Tibial artery (tissue), 4 donors: ENCODE measurements at regions of chr12 and their contacts with region 1.

Region 1: DNA sequence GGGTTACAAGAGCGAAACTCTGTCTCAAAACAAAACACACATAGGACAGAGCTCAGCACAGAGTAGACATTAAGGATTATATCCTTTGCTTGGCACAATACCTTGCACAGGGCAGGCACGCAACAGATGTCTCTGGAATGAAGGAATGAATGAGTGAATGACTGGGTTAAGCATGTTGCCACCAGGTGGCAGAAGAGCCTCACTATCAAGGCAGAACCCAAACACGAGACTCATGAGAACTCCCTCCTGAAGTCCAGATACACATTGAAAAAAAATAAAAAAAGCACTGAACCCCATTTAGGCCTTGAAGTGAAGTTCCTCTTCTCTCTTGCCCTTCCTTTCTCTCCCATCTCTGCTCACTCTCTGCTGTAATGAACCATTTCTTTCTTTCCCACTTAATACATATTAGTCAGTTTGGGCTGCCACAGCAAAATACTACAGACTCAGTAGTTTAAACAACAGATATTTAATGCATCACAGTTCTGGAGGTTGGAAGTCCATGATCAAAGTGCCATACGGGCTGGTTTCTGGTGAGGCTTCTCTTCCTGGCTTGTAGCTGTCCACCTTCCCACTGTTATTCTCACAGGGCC is 26.6 kb upstream of the LTA4H start:
- DNase-seq: peak; percentile 77 to 82
- H3K4me3 ChIP-seq: no peak overlapping the region
- H3K27ac ChIP-seq: no peak overlapping the region
- H3K4me1 ChIP-seq: no peaks in the 10 kb centered on the region
- H3K27me3 ChIP-seq: no peaks in the 10 kb centered on the region
- CTCF ChIP-seq: peak; percentile 82 to 84

Region 2: GRCh38 chr12:95998611-95999286 is 63.2 kb before region 1 on chr12:
- intact Hi-C with region 1: no loop called
- DNase-seq: no peak
- H3K4me3 ChIP-seq: no peak overlapping the region
- H3K27ac ChIP-seq: peak overlapping the region in 1 of 2 donors; percentile 14
- H3K4me1 ChIP-seq: peaks cover 0 to 8% (median 7%) of the 10 kb centered on the region in 4 donors
- H3K27me3 ChIP-seq: no peaks in the 10 kb centered on the region
- CTCF ChIP-seq: peak; percentile 53 to 57

Region 3: GRCh38 chr12:96035278-96036236 is 26.4 kb before region 1 on chr12 and contains the start of gene LTA4H:
- intact Hi-C with region 1: no loop called
- DNase-seq: peak; percentile 98
- H3K4me3 ChIP-seq: peak within 1 kb of the TSS; percentile 88 to 94
- H3K27ac ChIP-seq: peak within 1 kb of the TSS; percentile 91 to 95
- H3K4me1 ChIP-seq: peaks cover 0 to 16% (median 10%) of the 10 kb centered on the region in 4 donors
- H3K27me3 ChIP-seq: no peaks in the 10 kb centered on the region
- CTCF ChIP-seq: no peak

Region 4: DNA sequence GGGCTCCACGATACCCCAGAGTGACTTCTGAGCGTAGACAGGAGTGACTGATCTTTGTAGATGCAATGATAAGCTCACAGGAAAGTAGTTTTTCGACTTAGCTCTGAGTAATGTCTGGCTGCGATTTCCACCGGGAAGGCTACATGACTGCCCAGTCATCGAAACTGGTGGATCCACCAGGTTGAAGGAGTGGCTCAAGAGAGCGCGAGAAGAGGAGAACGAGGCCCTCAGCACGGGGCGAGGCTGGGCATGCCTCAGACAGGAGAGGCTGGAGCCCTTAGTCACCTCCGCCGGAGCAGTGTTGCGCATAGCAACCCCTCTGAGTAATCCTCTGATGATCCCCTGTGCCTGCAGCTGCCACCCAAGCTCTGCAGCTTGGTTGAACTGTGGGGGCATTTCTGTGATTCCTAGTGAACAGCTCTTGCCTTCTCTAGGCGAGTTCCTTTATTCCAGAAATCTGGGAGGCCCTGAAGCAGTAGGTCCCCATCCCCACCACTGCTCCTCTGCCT is 157.8 kb after region 1 on chr12:
- intact Hi-C with region 1: loop called (anchors 5 kb)
- DNase-seq: no peak
- H3K4me3 ChIP-seq: no peak overlapping the region
- H3K27ac ChIP-seq: no peak overlapping the region
- H3K4me1 ChIP-seq: peaks cover 0 to 12% (median 6%) of the 10 kb centered on the region in 4 donors
- H3K27me3 ChIP-seq: no peaks in the 10 kb centered on the region
- CTCF ChIP-seq: no peak

Region 5: DNA sequence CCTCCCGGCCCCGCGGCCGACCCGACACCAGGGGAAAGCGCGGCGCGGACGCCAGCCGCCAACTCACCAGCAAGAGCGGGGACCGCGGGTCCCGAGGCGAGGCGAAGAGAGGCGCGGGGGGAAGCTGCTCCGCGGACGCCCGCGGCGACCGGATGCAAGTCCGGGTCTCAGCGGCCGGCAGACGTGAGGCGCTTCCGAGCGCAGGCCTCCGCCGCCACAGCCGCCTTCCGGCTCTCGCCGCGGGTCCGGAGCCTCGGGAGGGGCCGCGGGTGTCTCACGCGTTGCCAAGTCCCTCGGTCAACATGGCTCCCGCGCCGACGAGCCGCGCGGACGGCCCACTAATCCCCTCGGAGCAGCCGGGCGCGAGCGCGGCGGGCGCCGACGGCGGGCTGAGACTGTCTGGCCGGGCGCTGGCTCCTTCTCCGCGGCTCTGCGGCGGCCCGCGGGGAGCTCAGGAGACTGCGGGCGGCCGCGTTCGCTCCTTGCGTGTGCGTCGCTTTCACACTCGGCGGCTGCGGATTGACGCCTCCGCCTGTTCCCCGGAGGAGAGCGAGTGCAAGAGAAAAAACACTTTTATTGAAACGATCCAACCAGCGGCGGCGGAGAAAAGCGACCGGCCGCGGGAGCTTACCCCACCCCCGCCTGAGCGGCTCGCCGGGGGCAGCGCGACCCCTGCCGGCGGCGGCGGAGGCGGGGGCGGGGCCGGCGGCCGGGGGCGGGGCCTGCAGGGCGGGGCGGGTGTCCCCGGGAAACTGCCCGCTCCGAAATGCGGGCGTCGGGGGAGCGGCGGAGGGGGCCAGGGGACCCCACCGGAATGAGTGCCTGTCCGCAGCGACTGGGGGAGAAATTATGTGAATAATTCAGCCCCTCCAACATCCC is 338.2 kb after region 1 on chr12 and contains the start of gene CDK17:
- intact Hi-C with region 1: loop called (anchors 10 kb)
- DNase-seq: peak; percentile 77 to 91
- H3K4me3 ChIP-seq: peak within 1 kb of the TSS; percentile 88 to 93
- H3K27ac ChIP-seq: peak within 1 kb of the TSS; percentile 99 to 100
- H3K4me1 ChIP-seq: peaks cover 0 to 24% (median 10%) of the 10 kb centered on the region in 4 donors
- H3K27me3 ChIP-seq: no peaks in the 10 kb centered on the region
- CTCF ChIP-seq: peak in 1 of 2 experiments; percentile 40

Region 6: GRCh38 chr12:96516472-96517430 is 454.8 kb after region 1 on chr12:
- intact Hi-C with region 1: loop called (anchors 5 kb)
- DNase-seq: peak; percentile 76 to 82
- H3K4me3 ChIP-seq: no peak overlapping the region
- H3K27ac ChIP-seq: no peak overlapping the region
- H3K4me1 ChIP-seq: no peaks in the 10 kb centered on the region
- H3K27me3 ChIP-seq: no peaks in the 10 kb centered on the region
- CTCF ChIP-seq: peak; percentile 38 to 72